PC-3 (cell line): ENCODE measurements at regions of chr7 and their contacts with region 1.

Region 1: GRCh38 chr7:124322561-124322960 is 289.7 kb upstream of the TMEM229A start:
- DNase-seq: peak; percentile 62
- ATAC-seq: peak; percentile 29; the same call in 1 of the 2 replicates
- H3K4me3 ChIP-seq: no peak overlapping the region
- H3K27ac ChIP-seq: no peak overlapping the region
- H3K4me1 ChIP-seq: peaks cover 47% of the 10 kb centered on the region
- H3K27me3 ChIP-seq: no peaks in the 10 kb centered on the region
- CTCF ChIP-seq: no peak

Region 2: DNA sequence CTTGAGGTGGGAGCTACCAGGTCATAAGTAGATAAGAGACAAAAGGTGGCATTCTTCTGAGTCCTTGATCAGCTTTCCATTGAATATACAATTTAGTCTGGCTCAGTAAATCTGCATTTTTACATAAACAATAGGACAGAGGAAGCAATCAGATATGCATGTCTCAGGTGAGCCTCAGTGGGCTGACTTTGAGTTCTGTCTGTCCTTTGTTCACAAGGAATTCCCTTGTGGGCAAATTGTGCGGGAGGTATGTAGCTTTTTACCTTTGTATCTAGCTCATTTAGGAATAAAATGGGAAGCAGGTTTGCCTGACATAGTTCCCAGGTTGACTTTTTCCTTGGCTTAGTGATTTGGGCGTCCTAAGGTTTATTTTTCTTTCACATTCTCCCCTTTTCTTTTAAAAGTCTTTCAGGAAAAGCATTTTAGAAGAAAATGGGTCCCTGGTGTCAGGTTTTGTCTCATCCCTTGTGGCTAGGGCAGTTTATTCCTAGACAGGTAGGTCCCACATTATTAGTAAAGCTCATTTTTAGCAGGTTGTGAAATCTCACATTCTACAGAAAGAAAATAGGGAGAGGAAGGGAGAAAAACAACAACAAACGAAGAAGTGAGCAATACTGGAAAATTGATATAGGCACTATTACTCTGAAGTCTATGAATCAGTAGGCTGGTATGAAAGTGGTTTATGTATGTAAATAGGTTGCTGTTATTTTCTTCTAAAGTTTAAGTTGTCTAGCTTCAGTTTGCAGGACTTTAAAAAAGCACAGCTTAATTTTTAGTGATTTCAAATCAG is 381.0 kb before region 1 on chr7:
- CTCF ChIA-PET with region 1: no interaction called
- POLR2A ChIA-PET with region 1: no interaction called
- intact Hi-C with region 1: no loop called
- DNase-seq: peak; percentile 41
- ATAC-seq: no peak
- H3K4me3 ChIP-seq: no peak overlapping the region
- H3K27ac ChIP-seq: no peak overlapping the region
- H3K4me1 ChIP-seq: peaks cover 16% of the 10 kb centered on the region
- H3K27me3 ChIP-seq: no peaks in the 10 kb centered on the region
- CTCF ChIP-seq: no peak

Region 3: DNA sequence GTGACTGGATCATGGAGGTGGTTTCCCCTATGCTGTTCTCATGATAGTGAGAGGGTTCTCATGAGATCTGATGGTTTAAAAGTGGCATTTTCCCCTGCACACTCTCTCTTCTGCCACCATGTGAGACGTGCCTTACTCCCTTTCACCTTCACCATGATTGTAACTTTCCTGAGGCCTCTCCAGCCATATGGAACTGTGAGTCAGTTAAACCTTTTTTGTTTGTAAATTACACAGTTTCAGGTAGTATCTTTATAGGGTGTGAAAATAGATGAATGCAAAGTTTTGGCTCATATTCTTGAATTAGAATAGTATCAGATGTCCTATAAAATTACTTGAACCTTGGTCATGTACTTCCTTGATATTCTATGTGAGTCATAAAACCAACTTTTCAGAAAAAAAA is 37.6 kb before region 1 on chr7:
- CTCF ChIA-PET with region 1: no interaction called
- POLR2A ChIA-PET with region 1: no interaction called
- intact Hi-C with region 1: loop called (anchors 2 kb)
- DNase-seq: peak; percentile 71
- ATAC-seq: peak; percentile 92
- H3K4me3 ChIP-seq: no peak overlapping the region
- H3K27ac ChIP-seq: peak overlapping the region; percentile 45
- H3K4me1 ChIP-seq: peaks cover 13% of the 10 kb centered on the region
- H3K27me3 ChIP-seq: no peaks in the 10 kb centered on the region
- CTCF ChIP-seq: no peak

Region 4: DNA sequence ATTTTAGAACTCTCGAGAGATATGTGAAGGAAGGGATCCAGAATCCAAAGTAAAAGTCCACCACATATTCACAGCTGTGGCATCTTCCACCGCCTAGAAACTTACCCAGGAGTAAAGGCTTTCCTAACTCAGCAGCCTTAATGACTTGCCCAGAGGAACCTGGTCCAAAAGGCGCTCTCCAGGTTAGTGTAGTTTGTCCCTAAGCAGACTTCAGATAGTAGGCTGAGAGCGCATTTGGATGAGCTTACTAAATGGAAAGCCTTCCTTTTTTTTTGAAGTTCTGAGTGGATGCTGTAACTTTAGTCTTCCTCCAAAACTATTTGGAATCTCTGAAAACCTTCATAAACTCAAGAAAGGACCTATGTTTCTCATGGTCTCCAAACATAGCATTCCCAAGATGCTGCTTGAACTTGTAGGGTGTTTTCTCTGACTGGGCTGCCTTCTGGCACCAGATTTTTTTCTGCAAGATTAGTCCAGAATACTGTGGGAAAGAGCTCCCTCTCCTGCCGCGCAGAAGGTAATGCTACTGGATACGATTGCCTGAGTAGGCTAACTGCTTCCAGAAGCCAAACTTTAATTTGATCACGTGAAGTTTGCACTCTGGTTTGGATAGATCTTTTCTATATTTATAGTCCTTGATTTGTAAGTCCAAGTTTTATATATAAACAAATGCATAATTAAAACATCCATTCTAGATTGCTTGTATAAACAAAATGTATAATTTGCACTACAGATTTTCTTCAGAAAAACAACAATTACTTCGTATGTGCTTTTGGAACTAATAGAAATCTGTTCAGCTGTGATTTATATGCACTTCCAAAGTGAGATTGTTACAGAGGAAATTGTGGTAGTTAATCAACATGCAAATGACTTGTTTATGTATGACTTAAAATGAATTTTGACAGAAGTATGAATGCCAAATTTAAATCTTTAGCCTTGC is 462.6 kb after region 1 on chr7:
- CTCF ChIA-PET with region 1: no interaction called
- POLR2A ChIA-PET with region 1: no interaction called
- intact Hi-C with region 1: loop called (anchors 5 kb)
- DNase-seq: peak; percentile 66
- ATAC-seq: peak; percentile 38
- H3K4me3 ChIP-seq: no peak overlapping the region
- H3K27ac ChIP-seq: no peak overlapping the region
- H3K4me1 ChIP-seq: peaks cover 8% of the 10 kb centered on the region; the same call in 1 of the 2 replicates
- H3K27me3 ChIP-seq: no peaks in the 10 kb centered on the region
- CTCF ChIP-seq: peak; percentile 92